ENCODE measurements at regions of chr2 and their contacts with region 1.

Region 1: DNA sequence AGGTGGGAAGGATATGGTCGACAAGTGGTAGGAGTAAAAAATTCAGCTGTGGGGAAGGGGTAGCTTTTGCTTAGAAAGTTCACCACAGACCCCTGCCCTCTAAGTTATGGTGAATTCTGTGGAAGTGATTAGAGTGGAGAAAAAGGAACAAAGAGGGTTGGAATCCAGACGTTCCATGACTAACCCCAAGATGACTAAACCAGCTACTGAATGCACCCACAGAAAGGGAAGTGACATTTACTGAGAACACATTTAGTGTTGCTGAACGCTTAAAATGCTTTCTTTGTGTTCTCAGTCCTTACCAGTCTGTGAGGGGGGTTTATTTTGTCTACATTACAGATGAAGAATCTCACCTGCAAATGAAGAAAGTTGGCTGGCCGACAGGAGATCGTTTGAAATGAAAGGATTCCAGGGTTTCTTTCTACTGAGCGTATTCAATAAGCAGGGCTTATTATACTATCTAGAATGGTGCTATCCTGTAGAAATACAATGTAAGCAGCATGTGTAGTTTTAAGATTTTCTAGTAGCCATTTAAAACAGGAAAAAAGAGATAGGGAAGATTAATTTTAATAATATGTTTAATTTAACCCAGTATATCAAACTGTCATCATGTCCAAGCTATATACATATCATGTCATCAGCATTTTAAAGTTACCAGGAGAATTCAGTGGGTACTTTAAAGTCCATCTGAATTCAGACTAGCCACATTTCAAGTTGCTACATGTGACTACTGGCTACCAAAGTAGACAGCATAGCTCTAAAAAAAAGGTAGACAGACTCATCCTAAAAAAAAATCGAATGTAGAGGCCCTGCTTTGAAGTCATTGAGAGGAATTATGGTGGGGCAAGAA is 60.1 kb downstream of the LIMS1 start:
- DNase-seq: peak; percentile 89
- ATAC-seq: peak; percentile 84
- H3K4me3 ChIP-seq: peak overlapping the region; percentile 36; the same call in 1 of the 2 replicates
- H3K27ac ChIP-seq: peak overlapping the region; percentile 85
- H3K4me1 ChIP-seq: peaks cover 41% of the 10 kb centered on the region
- H3K27me3 ChIP-seq: no peaks in the 10 kb centered on the region
- CTCF ChIP-seq: no peak

Region 2: DNA sequence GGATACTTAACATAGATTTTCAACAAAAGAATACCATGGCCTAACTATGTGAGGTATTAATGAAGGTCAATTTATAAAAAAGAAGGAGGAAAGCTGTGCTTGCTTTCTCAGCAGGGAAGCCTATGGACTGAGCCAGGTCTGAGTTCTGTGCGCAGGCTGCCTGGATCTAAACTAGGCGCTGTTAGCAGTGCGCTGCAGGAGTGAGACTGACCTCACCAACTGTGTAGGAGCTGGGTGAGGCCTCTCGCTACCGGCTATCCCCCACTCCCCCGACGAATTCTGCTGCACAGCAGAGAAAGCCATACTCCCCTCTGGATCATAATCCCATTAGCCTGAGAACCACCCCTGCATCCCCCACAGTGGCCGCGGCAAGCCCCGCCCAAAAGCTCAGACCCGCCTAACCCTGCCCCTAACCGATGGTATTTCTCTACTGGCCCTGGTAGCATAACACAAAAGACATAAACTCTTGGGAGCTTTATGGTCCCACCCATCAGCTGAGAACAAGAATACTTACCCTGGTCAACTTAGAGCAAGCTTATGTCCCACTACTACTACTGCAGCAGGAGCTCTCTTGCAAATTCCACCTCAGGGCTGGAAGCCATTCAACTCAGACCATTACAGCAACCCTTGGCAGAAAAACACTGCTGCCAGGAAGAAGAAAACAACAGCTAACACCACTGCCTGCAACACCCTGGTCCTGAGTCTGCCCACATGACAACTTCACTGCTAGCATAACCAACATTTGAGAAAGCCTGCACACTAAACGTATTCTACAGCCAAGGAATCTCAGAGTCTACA is 277.7 kb before region 1 on chr2:
- CTCF ChIA-PET with region 1: interaction called, 11 read pairs
- POLR2A ChIA-PET with region 1: no interaction called
- intact Hi-C with region 1: no loop called
- DNase-seq: no peak
- ATAC-seq: no peak
- H3K4me3 ChIP-seq: no peak overlapping the region
- H3K27ac ChIP-seq: no peak overlapping the region
- H3K4me1 ChIP-seq: peaks cover 24% of the 10 kb centered on the region
- H3K27me3 ChIP-seq: no peaks in the 10 kb centered on the region
- CTCF ChIP-seq: no peak

Region 3: GRCh38 chr2:108621087-108621559 is 26.8 kb after region 1 on chr2:
- CTCF ChIA-PET with region 1: no interaction called
- POLR2A ChIA-PET with region 1: no interaction called
- intact Hi-C with region 1: loop called (anchors 2 kb)
- DNase-seq: peak; percentile 73
- ATAC-seq: peak; percentile 83
- H3K4me3 ChIP-seq: no peak overlapping the region
- H3K27ac ChIP-seq: peak overlapping the region; percentile 42
- H3K4me1 ChIP-seq: peaks cover 56% of the 10 kb centered on the region
- H3K27me3 ChIP-seq: no peaks in the 10 kb centered on the region
- CTCF ChIP-seq: no peak